Naive thymus-derived CD8-positive, alpha-beta T cell (primary cell): ENCODE measurements at regions of chr11 and their contacts with region 1.

Region 1: GRCh38 chr11:122697636-122698167 is 42.2 kb downstream of the UBASH3B start:
- DNase-seq: peak; percentile 22 to 75 (median 42)
- ATAC-seq: peak; percentile 76 to 80
- H3K4me3 Mint-ChIP-seq: peak overlapping the region; percentile 54 to 88 (median 79)
- H3K27ac Mint-ChIP-seq: peak overlapping the region; percentile 87 to 98 (median 95)
- H3K4me1 Mint-ChIP-seq: peaks cover 37 to 95% (median 93%) of the 10 kb centered on the region in 4 donors
- H3K27me3 Mint-ChIP-seq: no peaks in the 10 kb centered on the region

Region 2: DNA sequence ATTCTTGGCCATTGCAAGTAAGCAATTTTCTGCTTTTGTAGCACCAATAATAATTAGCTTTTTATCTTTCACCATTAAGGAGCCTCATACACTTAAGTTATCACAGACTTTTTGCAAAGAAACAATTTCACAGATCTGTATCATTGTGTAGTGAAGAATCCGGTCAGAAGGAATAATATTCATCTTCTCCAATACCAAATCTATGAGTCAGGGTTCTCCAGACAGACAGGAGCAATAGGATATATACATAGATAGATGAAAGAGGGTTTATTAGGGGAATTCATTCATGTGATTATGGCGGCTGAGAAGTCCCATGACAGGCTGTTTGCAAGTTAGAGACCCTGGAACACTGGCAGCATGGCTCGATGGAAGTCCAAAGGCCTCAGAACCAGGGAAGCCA is 125.1 kb before region 1 on chr11:
- POLR2A ChIA-PET with region 1: no interaction called
- DNase-seq: no peak
- ATAC-seq: no peak
- H3K4me3 Mint-ChIP-seq: no peak overlapping the region
- H3K27ac Mint-ChIP-seq: no peak overlapping the region
- H3K4me1 Mint-ChIP-seq: no peaks in the 10 kb centered on the region
- H3K27me3 Mint-ChIP-seq: peaks cover 0 to 2% (median 0%) of the 10 kb centered on the region in 5 donors

Region 3: DNA sequence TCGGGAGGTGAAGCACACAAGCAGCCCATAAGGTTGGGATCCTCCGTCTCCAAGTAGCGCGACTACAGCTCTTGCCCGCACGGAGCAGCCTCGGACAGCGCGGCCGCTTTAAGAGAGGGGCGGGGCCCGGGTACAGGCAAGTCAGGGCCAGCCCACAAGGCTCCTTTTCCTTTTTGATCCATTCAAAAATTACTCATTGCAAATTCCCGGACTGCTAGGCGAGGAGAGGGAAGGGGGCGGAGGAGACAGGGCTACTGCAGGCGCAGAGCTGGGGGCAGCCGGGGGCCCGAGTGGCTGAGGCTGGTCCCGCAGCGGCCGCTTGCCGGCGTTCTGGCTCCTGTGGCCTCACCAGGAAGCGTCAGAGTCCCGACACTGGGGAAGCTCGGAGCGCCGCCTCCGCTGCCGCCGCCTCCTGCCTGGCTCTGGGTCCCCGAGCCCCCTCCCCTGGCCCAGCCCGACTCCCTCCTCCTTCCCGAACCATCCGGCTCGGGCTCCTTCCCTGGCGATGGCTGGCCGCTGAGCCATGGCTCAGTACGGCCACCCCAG is 42.1 kb before region 1 on chr11 and contains the start of gene UBASH3B:
- POLR2A ChIA-PET with region 1: interaction called, 66 read pairs
- DNase-seq: peak; percentile 29 to 69 (median 48)
- ATAC-seq: peak; percentile 72 to 79
- H3K4me3 Mint-ChIP-seq: peak within 1 kb of the TSS; percentile 92 to 100 (median 98)
- H3K27ac Mint-ChIP-seq: peak within 1 kb of the TSS; percentile 85 to 97 (median 96)
- H3K4me1 Mint-ChIP-seq: peaks cover 27 to 54% (median 45%) of the 10 kb centered on the region in 4 donors
- H3K27me3 Mint-ChIP-seq: no peaks in the 10 kb centered on the region
- polyA plus RNA-seq, gene UBASH3B: 6.8 to 12.8 (median 7.1) TPM

Region 4: DNA sequence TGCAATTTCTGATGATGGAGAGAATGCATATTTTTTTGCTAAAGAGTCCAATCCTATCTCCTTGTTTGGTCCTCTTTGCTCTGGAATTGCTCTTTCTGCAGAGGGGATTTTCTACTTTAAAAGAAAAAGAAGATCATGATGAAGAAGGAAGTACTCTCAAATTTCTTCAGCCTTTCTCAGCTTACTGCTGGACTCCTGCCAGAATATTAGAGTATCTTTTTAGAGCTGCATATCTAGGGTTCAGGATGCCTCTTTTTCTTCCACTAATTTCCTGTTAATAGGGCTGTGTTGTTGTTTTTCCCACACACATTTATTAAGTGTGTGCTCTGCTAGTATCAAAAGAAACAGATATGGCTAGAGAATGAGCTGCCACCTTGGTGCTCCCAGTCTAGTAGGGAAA is 24.0 kb before region 1 on chr11:
- POLR2A ChIA-PET with region 1: interaction called, 56 read pairs
- DNase-seq: peak in 1 of 10 donors; percentile 15
- ATAC-seq: no peak
- H3K4me3 Mint-ChIP-seq: peak overlapping the region in 5 of 10 donors; percentile 12 to 70 (median 22)
- H3K27ac Mint-ChIP-seq: peak overlapping the region in 7 of 10 donors; percentile 43 to 94 (median 77)
- H3K4me1 Mint-ChIP-seq: peaks cover 42 to 94% (median 85%) of the 10 kb centered on the region in 4 donors
- H3K27me3 Mint-ChIP-seq: no peaks in the 10 kb centered on the region

Region 5: GRCh38 chr11:122717264-122717867 is 19.7 kb after region 1 on chr11:
- POLR2A ChIA-PET with region 1: interaction called, 28 read pairs
- DNase-seq: peak in 8 of 10 donors; percentile 9 to 59 (median 32)
- ATAC-seq: peak; percentile 50 to 72
- H3K4me3 Mint-ChIP-seq: peak overlapping the region; percentile 30 to 84 (median 66)
- H3K27ac Mint-ChIP-seq: peak overlapping the region; percentile 43 to 94 (median 88)
- H3K4me1 Mint-ChIP-seq: peaks cover 32 to 98% (median 78%) of the 10 kb centered on the region in 4 donors
- H3K27me3 Mint-ChIP-seq: no peaks in the 10 kb centered on the region

Region 6: DNA sequence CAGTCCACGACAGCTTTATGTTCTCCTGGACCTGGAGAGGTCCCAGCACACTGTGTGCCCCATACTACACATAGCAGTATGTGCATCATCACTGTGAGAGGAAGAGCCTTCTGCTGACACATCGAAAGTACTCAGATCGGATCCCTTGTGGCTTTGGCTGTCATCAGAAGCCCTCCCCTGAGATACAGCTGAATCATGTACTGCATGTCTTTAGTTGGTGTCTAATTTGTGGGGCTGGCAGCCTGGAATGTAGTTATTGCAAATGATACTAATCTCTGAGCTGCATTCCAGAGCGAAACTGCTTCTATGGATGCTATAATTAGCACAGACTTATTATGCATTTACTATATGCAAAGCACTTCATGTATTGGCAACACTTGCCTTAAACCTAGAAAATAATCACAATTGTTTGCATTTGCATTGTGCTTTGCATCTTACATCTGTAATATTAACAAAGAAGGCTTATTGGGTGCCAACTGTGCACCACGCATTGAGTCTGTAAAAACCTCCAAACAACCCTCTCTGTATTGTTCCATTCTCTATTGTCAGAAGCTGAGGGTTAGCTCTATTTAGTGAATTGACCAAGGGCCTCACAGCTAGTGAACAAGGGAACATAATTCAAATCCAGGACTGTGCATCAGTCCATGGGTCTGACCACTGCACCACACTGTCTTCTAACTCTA is 51.4 kb after region 1 on chr11:
- POLR2A ChIA-PET with region 1: interaction called, 144 read pairs
- DNase-seq: peak in 4 of 10 donors; percentile 23 to 41 (median 34)
- ATAC-seq: peak in 1 of 2 donors; percentile 36
- H3K4me3 Mint-ChIP-seq: peak overlapping the region in 4 of 10 donors; percentile 5 to 59 (median 34)
- H3K27ac Mint-ChIP-seq: peak overlapping the region in 3 of 10 donors; percentile 21 to 70 (median 49)
- H3K4me1 Mint-ChIP-seq: peaks cover 19 to 51% (median 43%) of the 10 kb centered on the region in 4 donors
- H3K27me3 Mint-ChIP-seq: no peaks in the 10 kb centered on the region

Region 7: GRCh38 chr11:123062158-123062891 is 364.6 kb after region 1 on chr11:
- POLR2A ChIA-PET with region 1: interaction called, 16 read pairs
- DNase-seq: peak; percentile 98 to 100 (median 100)
- ATAC-seq: peak; percentile 83 to 88
- H3K4me3 Mint-ChIP-seq: peak overlapping the region; percentile 96 to 100 (median 99)
- H3K27ac Mint-ChIP-seq: peak overlapping the region; percentile 96 to 100 (median 98)
- H3K4me1 Mint-ChIP-seq: peaks cover 42 to 73% (median 60%) of the 10 kb centered on the region in 4 donors
- H3K27me3 Mint-ChIP-seq: peaks cover 0 to 1% (median 0%) of the 10 kb centered on the region in 5 donors